ENCODE measurements at regions of chr17 and their contacts with region 1.

Region 1: DNA sequence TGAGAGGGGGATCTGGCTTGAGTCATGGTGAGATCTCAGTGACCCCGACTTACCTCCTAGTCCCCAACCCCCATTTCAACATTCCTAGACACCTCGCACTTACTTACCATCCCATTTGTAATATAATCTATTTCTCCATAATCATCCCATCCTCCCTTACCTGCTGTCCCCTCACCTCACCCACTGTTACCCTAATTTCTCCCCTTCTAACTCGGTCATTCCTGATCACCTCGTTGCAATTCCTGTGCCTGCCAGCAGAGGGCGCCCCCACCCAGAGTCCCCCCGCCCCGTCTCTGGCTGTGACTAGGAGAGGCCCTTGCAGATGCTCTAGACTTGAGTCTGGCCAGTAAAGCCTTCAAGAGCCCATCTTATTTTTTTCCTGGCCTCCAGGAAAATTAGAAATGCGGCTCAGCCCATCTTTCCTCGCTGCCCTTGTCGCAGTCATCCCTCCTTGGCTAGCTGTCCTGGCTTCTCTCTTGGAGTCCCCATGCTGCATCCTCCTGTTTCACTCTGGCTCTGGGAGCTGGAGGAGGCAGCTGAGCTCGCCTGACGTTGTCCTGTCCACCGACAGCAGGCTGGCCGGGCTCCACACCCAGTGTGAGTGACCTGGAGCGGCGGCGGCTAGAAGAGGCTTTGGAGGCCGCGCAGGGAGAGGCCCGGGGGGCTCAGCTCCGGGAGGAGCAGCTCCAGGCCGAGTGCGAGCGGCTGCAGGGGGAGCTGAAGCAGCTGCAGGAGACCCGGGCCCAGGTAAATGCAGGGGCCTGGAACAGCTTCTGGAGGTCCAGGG is 5.0 kb downstream of the TBKBP1 start:
- DNase-seq: peak; percentile 79
- ATAC-seq: peak; percentile 49
- H3K4me3 ChIP-seq: no peak overlapping the region
- H3K4me3 Mint-ChIP-seq: no peak overlapping the region
- H3K27ac ChIP-seq: no peak overlapping the region
- H3K27ac Mint-ChIP-seq: peak overlapping the region; percentile 15
- H3K4me1 ChIP-seq: peaks cover 25 to 61% of the 10 kb centered on the region in 2 donors
- H3K4me1 Mint-ChIP-seq: peaks cover 48% of the 10 kb centered on the region
- H3K27me3 ChIP-seq: no peaks in the 10 kb centered on the region
- H3K27me3 Mint-ChIP-seq: no peaks in the 10 kb centered on the region
- CTCF ChIP-seq: peak; percentile 99

Region 2: DNA sequence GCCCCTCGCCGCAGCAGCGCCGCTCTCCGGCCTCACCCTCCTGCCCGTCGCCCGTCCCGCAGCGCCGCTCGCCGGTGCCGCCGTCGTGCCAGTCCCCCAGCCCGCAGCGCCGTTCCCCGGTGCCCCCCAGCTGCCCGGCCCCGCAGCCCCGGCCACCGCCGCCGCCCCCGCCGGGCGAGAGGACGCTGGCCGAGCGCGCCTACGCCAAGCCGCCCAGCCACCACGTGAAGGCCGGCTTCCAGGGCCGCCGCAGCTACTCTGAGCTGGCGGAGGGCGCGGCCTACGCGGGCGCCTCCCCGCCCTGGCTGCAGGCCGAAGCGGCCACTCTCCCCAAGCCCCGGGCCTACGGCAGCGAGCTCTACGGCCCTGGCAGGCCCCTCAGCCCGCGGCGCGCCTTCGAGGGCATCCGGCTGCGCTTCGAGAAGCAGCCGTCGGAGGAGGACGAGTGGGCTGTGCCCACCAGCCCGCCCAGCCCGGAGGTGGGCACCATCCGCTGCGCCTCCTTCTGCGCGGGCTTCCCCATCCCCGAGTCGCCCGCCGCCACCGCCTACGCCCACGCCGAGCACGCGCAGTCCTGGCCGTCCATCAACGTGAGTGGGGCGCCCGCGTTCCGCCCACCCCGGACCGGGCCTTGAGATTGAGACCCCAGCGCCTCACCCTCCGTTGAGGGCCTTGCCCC is 10.1 kb after region 1 on chr17:
- CTCF ChIA-PET with region 1: interaction called, 44 read pairs
- POLR2A ChIA-PET with region 1: interaction called, 5 read pairs
- intact Hi-C with region 1: loop called (anchors 2 kb)
- DNase-seq: no peak
- ATAC-seq: no peak
- H3K4me3 ChIP-seq: no peak overlapping the region
- H3K4me3 Mint-ChIP-seq: no peak overlapping the region
- H3K27ac ChIP-seq: no peak overlapping the region
- H3K27ac Mint-ChIP-seq: no peak overlapping the region
- H3K4me1 ChIP-seq: peaks cover 58 to 66% of the 10 kb centered on the region in 2 donors
- H3K4me1 Mint-ChIP-seq: peaks cover 62% of the 10 kb centered on the region
- H3K27me3 ChIP-seq: no peaks in the 10 kb centered on the region
- H3K27me3 Mint-ChIP-seq: no peaks in the 10 kb centered on the region
- CTCF ChIP-seq: no peak

Region 3: GRCh38 chr17:47717261-47717697 is 18.3 kb after region 1 on chr17:
- CTCF ChIA-PET with region 1: interaction called, 44 read pairs
- POLR2A ChIA-PET with region 1: interaction called, 4 read pairs
- intact Hi-C with region 1: loop called (anchors 2 kb)
- DNase-seq: peak; percentile 45
- ATAC-seq: peak; percentile 18
- H3K4me3 ChIP-seq: no peak overlapping the region
- H3K4me3 Mint-ChIP-seq: peak overlapping the region; percentile 21
- H3K27ac ChIP-seq: no peak overlapping the region
- H3K27ac Mint-ChIP-seq: peak overlapping the region; percentile 16
- H3K4me1 ChIP-seq: peaks cover 85 to 98% of the 10 kb centered on the region in 2 donors
- H3K4me1 Mint-ChIP-seq: peaks cover 94% of the 10 kb centered on the region
- H3K27me3 ChIP-seq: peaks cover 0 to 14% (median 10%) of the 10 kb centered on the region in 4 experiments
- H3K27me3 Mint-ChIP-seq: peaks cover 9% of the 10 kb centered on the region
- CTCF ChIP-seq: no peak

Region 4: GRCh38 chr17:47742319-47743181 is 43.6 kb after region 1 on chr17:
- CTCF ChIA-PET with region 1: interaction called, 108 read pairs
- POLR2A ChIA-PET with region 1: interaction called, 8 read pairs
- intact Hi-C with region 1: loop called (anchors 1 kb)
- DNase-seq: peak; percentile 70
- ATAC-seq: peak; percentile 86
- H3K4me3 ChIP-seq: no peak overlapping the region
- H3K4me3 Mint-ChIP-seq: no peak overlapping the region
- H3K27ac ChIP-seq: no peak overlapping the region
- H3K27ac Mint-ChIP-seq: no peak overlapping the region
- H3K4me1 ChIP-seq: peaks cover 7 to 19% of the 10 kb centered on the region in 2 donors
- H3K4me1 Mint-ChIP-seq: peaks cover 22% of the 10 kb centered on the region
- H3K27me3 ChIP-seq: peaks cover 0 to 4% (median 0%) of the 10 kb centered on the region in 4 experiments
- H3K27me3 Mint-ChIP-seq: peaks cover 8% of the 10 kb centered on the region
- CTCF ChIP-seq: peak; percentile 67

Region 5: GRCh38 chr17:47762728-47763127 is 63.8 kb after region 1 on chr17:
- CTCF ChIA-PET with region 1: no interaction called
- POLR2A ChIA-PET with region 1: no interaction called
- intact Hi-C with region 1: no loop called
- DNase-seq: no peak
- ATAC-seq: no peak
- H3K4me3 ChIP-seq: no peak overlapping the region
- H3K4me3 Mint-ChIP-seq: no peak overlapping the region
- H3K27ac ChIP-seq: no peak overlapping the region
- H3K27ac Mint-ChIP-seq: no peak overlapping the region
- H3K4me1 ChIP-seq: no peaks in the 10 kb centered on the region
- H3K4me1 Mint-ChIP-seq: no peaks in the 10 kb centered on the region
- H3K27me3 ChIP-seq: peaks cover 0 to 5% (median 3%) of the 10 kb centered on the region in 4 experiments
- H3K27me3 Mint-ChIP-seq: peaks cover 24% of the 10 kb centered on the region
- CTCF ChIP-seq: no peak

Region 6: GRCh38 chr17:47802341-47803022 is 103.5 kb after region 1 on chr17:
- CTCF ChIA-PET with region 1: interaction called, 8 read pairs
- POLR2A ChIA-PET with region 1: no interaction called
- intact Hi-C with region 1: loop called (anchors 10 kb)
- DNase-seq: peak; percentile 68
- ATAC-seq: peak; percentile 79
- H3K4me3 ChIP-seq: no peak overlapping the region
- H3K4me3 Mint-ChIP-seq: no peak overlapping the region
- H3K27ac ChIP-seq: no peak overlapping the region
- H3K27ac Mint-ChIP-seq: no peak overlapping the region
- H3K4me1 ChIP-seq: no peaks in the 10 kb centered on the region
- H3K4me1 Mint-ChIP-seq: peaks cover 1% of the 10 kb centered on the region
- H3K27me3 ChIP-seq: peaks cover 0 to 8% (median 0%) of the 10 kb centered on the region in 4 experiments
- H3K27me3 Mint-ChIP-seq: peaks cover 7% of the 10 kb centered on the region
- CTCF ChIP-seq: peak; percentile 71

Region 7: DNA sequence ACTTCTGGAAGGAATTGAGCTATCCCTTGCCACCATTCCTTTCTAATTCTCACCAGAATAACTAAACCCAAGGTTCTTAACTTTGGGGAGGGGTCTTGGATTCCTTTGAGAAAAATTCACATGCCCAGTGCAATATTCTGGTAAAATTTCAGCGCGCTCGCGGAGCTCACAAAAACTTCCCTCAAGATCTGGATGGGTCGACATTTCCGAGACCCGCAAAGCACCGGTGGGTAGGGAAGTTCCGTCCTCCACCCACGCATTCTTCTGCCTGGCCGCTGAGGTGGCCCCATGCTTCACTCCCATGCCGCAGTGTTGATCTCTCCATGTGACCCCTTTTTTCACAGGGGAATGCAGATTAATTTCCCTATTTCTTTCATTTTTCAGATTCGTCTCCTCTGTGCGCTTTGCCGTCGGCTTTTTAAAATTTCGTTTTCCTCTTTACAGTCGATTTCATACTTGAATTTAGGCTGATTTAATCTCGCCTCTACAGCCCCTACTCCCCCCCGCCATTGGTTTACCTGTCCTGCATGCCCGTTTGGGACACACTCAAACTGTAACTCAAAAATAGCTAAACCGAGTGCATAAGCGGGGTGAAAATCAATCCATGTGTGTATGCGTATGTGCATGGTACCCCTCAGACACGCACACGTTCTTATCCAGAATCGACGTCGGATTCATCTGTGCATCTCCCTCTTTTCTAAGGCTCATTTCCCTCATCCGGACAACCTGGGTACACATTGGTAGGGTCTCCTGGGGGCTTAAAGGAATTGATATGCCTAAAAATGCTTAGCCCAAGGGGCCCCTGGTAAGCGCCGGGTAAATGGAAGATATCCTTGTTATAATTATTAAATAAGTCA is 153.4 kb after region 1 on chr17:
- CTCF ChIA-PET with region 1: no interaction called
- POLR2A ChIA-PET with region 1: no interaction called
- intact Hi-C with region 1: no loop called
- DNase-seq: peak; percentile 57
- ATAC-seq: no peak
- H3K4me3 ChIP-seq: peak overlapping the region in 1 of 5 experiments; percentile 29
- H3K4me3 Mint-ChIP-seq: peak overlapping the region; percentile 46
- H3K27ac ChIP-seq: no peak overlapping the region
- H3K27ac Mint-ChIP-seq: no peak overlapping the region
- H3K4me1 ChIP-seq: peaks cover 32 to 34% of the 10 kb centered on the region in 2 donors
- H3K4me1 Mint-ChIP-seq: peaks cover 20% of the 10 kb centered on the region
- H3K27me3 ChIP-seq: peaks cover 0 to 86% (median 50%) of the 10 kb centered on the region in 4 experiments
- H3K27me3 Mint-ChIP-seq: peaks cover 79% of the 10 kb centered on the region
- CTCF ChIP-seq: no peak

Region 8: GRCh38 chr17:48037036-48037837 is 338.3 kb after region 1 on chr17 and contains the start of gene COPZ2:
- CTCF ChIA-PET with region 1: no interaction called
- POLR2A ChIA-PET with region 1: no interaction called
- intact Hi-C with region 1: no loop called
- DNase-seq: peak; percentile 79
- ATAC-seq: peak; percentile 96
- H3K4me3 ChIP-seq: peak within 1 kb of the TSS; percentile 12 to 76 (median 70)
- H3K4me3 Mint-ChIP-seq: peak within 1 kb of the TSS; percentile 90
- H3K27ac ChIP-seq: no peak within 1 kb of the TSS
- H3K27ac Mint-ChIP-seq: peak within 1 kb of the TSS; percentile 60
- H3K4me1 ChIP-seq: peaks cover 15% of the 10 kb centered on the region in 2 donors
- H3K4me1 Mint-ChIP-seq: peaks cover 15% of the 10 kb centered on the region
- H3K27me3 ChIP-seq: peaks cover 0 to 38% (median 9%) of the 10 kb centered on the region in 4 experiments
- H3K27me3 Mint-ChIP-seq: peaks cover 24% of the 10 kb centered on the region
- CTCF ChIP-seq: peak; percentile 94
- total RNA-seq, gene COPZ2: 1.2 and 2.3 TPM in 2 replicates

Measured in B cell (primary cell).